Adrenal gland (tissue), 19 donors: ENCODE measurements at regions of chr22 and their contacts with region 1.

Region 1: GRCh38 chr22:44625981-44626687 is 75.9 kb upstream of the PRR5 start:
- DNase-seq: peak; percentile 52 to 87 (median 70)
- H3K4me3 ChIP-seq: no peak overlapping the region
- H3K27ac ChIP-seq: no peak overlapping the region
- H3K4me1 ChIP-seq: no peaks in the 10 kb centered on the region
- H3K27me3 ChIP-seq: peaks cover 6% of the 10 kb centered on the region
- CTCF ChIP-seq: peak; percentile 98 to 100 (median 99)
- POLR2A ChIP-seq: peak in 1 of 2 donors; percentile 10

Region 2: DNA sequence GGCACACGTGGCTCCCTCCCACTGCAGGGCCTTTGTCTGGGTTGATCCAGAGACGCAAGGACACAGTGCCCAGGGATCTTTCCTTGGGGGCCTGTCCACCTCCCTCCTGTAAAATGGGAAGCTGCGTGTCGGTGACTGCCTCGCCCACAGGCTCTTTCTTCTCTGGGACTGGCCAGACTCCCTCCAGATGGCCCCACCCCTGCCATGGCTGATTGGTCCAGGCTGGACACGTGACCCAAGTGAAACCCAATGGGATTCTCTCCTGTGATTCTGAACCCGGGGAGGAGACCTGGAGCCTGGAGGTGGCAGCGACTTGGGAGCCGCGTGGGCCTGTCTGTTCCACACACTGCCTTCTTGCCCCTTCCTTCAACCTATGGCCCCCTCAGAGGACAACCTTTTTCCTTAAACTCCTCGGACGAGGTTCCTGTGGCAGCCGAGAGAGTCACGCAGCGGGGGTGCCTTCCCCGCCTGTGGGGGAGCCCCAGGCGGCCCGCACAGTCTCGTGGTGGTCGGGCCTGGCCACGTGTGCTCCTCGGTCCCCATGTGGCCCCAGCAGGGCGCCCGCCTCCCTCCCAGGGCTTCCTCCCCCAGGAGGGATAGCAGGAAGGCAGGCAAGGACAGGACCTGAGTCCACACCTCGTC is 1226.7 kb before region 1 on chr22:
- intact Hi-C with region 1: loop called in 1 of 2 experiments (anchors 10 kb)
- DNase-seq: no peak
- H3K4me3 ChIP-seq: no peak overlapping the region
- H3K27ac ChIP-seq: no peak overlapping the region
- H3K4me1 ChIP-seq: no peaks in the 10 kb centered on the region
- H3K27me3 ChIP-seq: peaks cover 2% of the 10 kb centered on the region
- CTCF ChIP-seq: no peak
- POLR2A ChIP-seq: no peak

Region 3: DNA sequence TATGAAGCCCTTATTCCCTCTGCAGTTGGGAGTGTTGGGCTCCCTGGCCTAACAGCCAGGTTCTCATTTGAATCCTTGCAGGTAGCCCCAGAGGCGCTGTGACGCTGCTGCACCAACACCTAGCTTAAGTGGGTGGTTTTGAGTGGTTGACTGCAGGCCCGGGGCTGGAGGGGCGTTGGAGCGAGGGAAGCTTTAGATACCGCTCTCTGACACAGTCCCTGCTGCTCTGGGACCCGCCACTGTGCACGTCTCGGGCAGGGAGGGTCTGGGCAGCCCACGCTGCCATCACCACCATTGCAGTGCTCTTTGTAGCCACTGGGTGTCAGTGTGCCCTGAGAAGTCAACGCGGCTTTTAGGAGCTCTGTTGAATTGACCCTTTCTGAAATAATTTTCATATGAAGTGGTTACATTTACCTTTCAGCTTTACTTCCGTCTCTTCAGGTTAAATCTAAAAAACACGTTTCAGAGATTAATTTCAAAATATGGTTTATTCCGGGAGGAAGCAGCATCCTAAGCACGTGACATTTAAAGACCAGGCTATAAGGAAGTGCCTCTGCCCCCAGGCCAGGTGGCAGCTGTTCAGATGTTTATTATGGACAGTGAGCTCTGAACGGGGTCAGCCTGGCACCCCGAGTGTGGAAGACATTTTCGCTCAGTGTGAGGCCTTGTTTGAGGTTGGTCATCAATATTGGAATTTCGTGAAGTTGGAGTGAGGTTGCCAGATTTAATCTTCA is 632.9 kb before region 1 on chr22:
- intact Hi-C with region 1: loop called (anchors 5 kb)
- DNase-seq: peak; percentile 57 to 78 (median 63)
- H3K4me3 ChIP-seq: no peak overlapping the region
- H3K27ac ChIP-seq: no peak overlapping the region
- H3K4me1 ChIP-seq: peaks cover 0 to 15% of the 10 kb centered on the region in 2 donors
- H3K27me3 ChIP-seq: no peaks in the 10 kb centered on the region
- CTCF ChIP-seq: peak; percentile 89 to 98 (median 93)
- POLR2A ChIP-seq: no peak

Region 4: DNA sequence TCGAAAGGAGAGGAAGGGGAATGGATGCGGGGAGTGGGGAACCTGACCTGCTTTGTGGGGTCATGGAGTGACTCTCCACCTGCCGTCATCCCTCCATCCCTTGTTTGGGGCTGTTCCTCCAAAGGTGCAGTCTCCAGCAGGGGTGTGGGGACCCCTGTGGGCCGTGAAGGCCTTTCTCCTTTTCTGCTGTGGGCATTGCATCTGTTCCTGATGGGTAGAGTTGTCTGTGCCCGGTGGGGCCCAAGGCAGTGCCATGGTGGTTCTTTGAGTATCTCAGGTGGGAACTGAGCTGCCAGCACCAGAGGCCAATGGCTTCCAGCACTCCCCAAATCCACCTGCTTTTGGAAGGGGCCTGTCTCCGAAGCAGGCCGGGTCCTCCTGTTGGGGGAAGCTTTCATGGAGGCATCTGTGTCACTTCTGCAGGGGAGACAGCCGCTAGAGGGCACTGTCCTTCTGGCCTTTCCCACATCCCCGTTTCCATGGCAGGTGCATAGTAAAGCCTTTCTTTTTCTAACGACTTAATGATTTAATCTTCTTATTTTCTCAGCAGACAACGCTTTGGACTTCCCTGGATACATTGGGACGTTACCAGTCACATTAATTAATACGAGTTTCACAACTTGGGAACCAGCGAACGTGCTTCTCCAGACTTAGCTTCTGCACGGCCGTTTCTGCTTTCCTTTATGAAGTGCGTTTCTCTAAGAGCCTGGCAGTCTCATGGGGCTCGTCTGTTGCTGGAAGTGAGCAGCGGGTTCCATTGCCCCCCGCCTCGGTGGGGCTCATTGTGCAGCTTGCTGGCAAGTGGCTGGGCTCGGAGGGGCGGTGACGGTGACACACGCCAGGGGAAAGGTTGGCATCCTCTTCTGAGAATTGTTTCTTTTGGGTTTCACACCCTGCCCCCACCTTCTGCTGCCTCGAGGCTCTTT is 544.9 kb before region 1 on chr22:
- intact Hi-C with region 1: loop called in 1 of 2 experiments (anchors 2 kb)
- DNase-seq: peak; percentile 57 to 93 (median 81)
- H3K4me3 ChIP-seq: no peak overlapping the region
- H3K27ac ChIP-seq: no peak overlapping the region
- H3K4me1 ChIP-seq: peaks cover 10% of the 10 kb centered on the region in 2 donors
- H3K27me3 ChIP-seq: no peaks in the 10 kb centered on the region
- CTCF ChIP-seq: peak; percentile 63 to 92 (median 75)
- POLR2A ChIP-seq: no peak